ENCODE measurements at regions of chr20 and their contacts with region 1.

Region 1: GRCh38 chr20:45436732-45437391 is 20.9 kb downstream of the PIGT start:
- DNase-seq: peak; percentile 85
- ATAC-seq: peak; percentile 99
- H3K4me3 ChIP-seq: peak overlapping the region; percentile 68 to 82 (median 77)
- H3K27ac ChIP-seq: no peak overlapping the region
- H3K4me1 ChIP-seq: peaks cover 6% of the 10 kb centered on the region; the same call in 1 of the 2 replicates
- H3K27me3 ChIP-seq: no peaks in the 10 kb centered on the region
- CTCF ChIP-seq: peak; percentile 100
- EP300 ChIP-seq: peak in 1 of 2 experiments; percentile 8; a peak in 1 of 4 replicates
- POLR2A ChIP-seq: peak in 1 of 2 experiments; percentile 57; a peak in 2 of 4 replicates
- RAD21 ChIP-seq: peak; percentile 100

Region 2: DNA sequence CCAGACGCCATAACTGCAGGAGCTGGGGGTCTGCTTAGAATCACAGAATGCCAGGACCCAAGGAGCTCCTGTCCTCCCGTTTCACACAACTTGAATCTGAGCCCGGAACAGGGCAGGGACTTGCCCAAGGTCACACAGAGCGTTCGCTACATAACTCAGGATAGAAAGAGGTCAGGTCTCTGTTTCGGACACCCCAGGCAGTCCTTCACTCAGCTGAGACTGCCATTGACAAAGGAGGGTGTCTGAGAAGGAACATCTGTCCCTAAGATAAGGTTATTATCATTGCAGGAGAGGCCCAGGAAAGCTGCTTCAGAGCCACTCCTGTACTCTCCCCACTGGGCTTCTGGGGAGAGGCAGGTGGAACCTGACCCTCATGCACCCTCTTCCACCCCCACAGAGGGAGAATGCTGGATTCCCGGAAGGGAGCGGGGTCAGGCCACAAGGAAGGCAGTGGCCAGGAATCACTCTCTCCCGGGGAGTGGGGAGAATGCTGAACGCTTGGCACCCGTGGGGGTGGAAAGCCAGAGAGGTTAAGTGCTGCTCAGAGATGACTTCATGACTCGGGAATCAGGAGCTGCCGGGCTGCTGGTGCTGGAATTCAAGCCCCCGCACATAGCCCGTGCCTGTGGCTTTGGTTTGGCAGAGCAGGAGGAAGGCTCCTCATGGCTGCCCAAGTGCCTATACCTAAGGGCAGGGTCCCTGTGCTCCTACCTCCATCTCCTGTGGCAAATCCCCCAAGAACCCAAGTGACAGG is 99.3 kb before region 1 on chr20:
- CTCF ChIA-PET with region 1: no interaction called
- POLR2A ChIA-PET with region 1: interaction called, 44 read pairs
- in situ Hi-C with region 1: no loop called
- intact Hi-C with region 1: no loop called
- DNase-seq: peak; percentile 65
- ATAC-seq: peak; percentile 32
- H3K4me3 ChIP-seq: peak overlapping the region; percentile 31 to 57 (median 32)
- H3K27ac ChIP-seq: peak overlapping the region; percentile 80
- H3K4me1 ChIP-seq: peaks cover 67% of the 10 kb centered on the region
- H3K27me3 ChIP-seq: no peaks in the 10 kb centered on the region
- CTCF ChIP-seq: no peak
- EP300 ChIP-seq: no peak
- POLR2A ChIP-seq: peak in 1 of 2 experiments; percentile 39; a peak in 1 of 4 replicates
- RAD21 ChIP-seq: no peak

Region 3: GRCh38 chr20:45362804-45363610 is 73.9 kb before region 1 on chr20 and contains the start of gene SYS1:
- CTCF ChIA-PET with region 1: interaction called, 22 read pairs
- POLR2A ChIA-PET with region 1: interaction called, 53 read pairs
- in situ Hi-C with region 1: no loop called
- intact Hi-C with region 1: loop called (anchors 1 kb)
- DNase-seq: peak; percentile 100
- ATAC-seq: peak; percentile 89
- H3K4me3 ChIP-seq: peak within 1 kb of the TSS; percentile 78 to 95 (median 91)
- H3K27ac ChIP-seq: peak within 1 kb of the TSS; percentile 92
- H3K4me1 ChIP-seq: peaks cover 64% of the 10 kb centered on the region
- H3K27me3 ChIP-seq: no peaks in the 10 kb centered on the region; a peak in 2 of 5 replicates
- CTCF ChIP-seq: peak; percentile 99
- EP300 ChIP-seq: peak; percentile 8 to 29; a peak in 3 of 4 replicates
- POLR2A ChIP-seq: peak; percentile 94 to 98
- RAD21 ChIP-seq: peak; percentile 89
- total RNA-seq, gene SYS1: 22.0 and 38.3 TPM in 2 replicates

Region 4: DNA sequence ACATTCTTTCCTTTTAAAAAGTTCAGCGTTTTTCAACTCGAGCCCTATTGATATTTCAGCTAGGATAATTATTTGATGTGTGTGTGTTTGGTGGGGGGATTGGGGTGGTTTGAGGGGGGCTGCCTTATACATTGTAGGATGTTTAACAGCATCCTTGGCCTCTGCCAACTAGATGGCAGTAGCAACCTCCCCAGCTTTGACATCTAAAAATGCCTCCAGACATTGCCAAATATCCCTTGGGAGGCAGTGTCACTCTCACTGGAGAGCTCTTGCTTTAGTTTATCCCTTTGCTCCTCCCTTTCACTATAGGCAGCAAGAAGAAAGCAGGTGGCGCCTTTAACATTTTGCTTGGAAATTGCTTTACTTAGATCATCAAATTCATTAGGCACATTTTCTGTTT is 44.1 kb before region 1 on chr20:
- CTCF ChIA-PET with region 1: no interaction called
- POLR2A ChIA-PET with region 1: no interaction called
- in situ Hi-C with region 1: no loop called
- intact Hi-C with region 1: loop called (anchors 5 kb)
- DNase-seq: no peak
- ATAC-seq: no peak
- H3K4me3 ChIP-seq: no peak overlapping the region
- H3K27ac ChIP-seq: no peak overlapping the region
- H3K4me1 ChIP-seq: no peaks in the 10 kb centered on the region
- H3K27me3 ChIP-seq: no peaks in the 10 kb centered on the region
- CTCF ChIP-seq: peak; percentile 22
- EP300 ChIP-seq: no peak
- POLR2A ChIP-seq: no peak
- RAD21 ChIP-seq: no peak

Region 5: DNA sequence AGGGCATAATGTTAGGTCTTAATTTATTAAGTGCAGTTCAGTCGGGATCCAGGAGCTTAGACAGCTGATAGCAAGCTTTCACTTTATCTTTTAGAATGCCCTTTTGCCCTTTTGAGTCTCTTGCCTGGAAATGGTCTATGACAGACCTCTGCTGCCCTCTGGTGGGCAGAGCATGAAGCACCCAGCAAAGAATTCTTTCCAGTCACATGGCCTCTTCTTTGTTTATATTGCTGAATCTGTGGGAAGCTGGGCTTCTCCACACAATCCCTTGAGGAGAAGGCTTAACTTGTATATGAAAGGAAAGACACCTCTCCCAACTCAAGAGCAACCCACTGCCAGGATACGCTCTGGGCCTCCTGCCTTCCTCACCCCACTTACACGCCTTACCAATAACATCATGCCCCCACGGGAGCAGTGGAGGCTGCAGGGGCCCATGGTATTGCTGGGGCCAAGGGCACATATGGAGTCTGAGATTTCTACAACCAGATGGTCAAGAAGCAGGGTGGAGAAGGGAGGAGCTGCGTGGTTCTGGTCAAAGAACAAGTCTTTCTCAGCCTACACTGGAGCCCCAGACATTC is 334.4 kb after region 1 on chr20:
- CTCF ChIA-PET with region 1: interaction called, 3 read pairs
- POLR2A ChIA-PET with region 1: interaction called, 4 read pairs
- in situ Hi-C with region 1: no loop called
- intact Hi-C with region 1: loop called (anchors 5 kb)
- DNase-seq: peak; percentile 92
- ATAC-seq: peak; percentile 90
- H3K4me3 ChIP-seq: peak overlapping the region in 1 of 3 experiments; percentile 44; a peak in 2 of 6 replicates
- H3K27ac ChIP-seq: no peak overlapping the region
- H3K4me1 ChIP-seq: peaks cover 15% of the 10 kb centered on the region
- H3K27me3 ChIP-seq: peaks cover 2 to 15% of the 10 kb centered on the region in 2 experiments; a peak in 3 of 5 replicates
- CTCF ChIP-seq: peak; percentile 97
- EP300 ChIP-seq: 0 out of 4 replicates have a peak, but pooled peaks of 1 of the 2 experiments have one; percentile 1
- POLR2A ChIP-seq: no peak
- RAD21 ChIP-seq: peak; percentile 99

Measured in HepG2 (cell line).